ENCODE measurements at regions of chr2 and their contacts with region 1.

Region 1: GRCh38 chr2:84631047-84631446 is 114.7 kb downstream of the DNAH6 start:
- DNase-seq: no peak
- H3K4me3 Mint-ChIP-seq: no peak overlapping the region
- H3K27ac Mint-ChIP-seq: no peak overlapping the region
- H3K4me1 Mint-ChIP-seq: peaks cover 13% of the 10 kb centered on the region
- H3K27me3 Mint-ChIP-seq: no peaks in the 10 kb centered on the region

Region 2: DNA sequence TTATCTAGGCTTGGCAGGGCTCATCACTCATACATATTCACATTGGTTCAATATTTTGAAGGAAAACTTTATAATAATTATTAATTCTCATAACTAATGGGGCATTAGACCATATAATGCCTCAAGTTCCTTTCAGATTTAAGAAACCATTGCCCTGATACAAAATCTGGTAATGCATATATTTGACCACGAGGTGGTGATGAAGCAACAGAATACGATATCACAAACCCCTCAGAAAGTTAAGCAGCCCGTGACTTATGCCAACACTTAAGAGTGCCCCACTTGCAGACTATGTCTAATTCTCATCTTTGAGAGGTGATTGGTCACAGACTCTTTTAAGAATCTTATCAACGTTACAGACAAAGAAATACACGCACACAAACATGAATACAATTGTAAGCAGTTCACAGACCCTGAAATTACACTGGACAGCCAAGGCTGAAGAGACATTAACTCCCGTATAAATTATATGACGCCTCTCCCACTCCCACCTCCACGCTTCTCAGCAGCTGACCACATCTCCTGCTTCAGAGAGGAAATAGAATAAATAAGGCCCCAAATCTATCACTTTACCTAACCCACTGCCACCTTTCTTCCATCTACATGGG is 135.4 kb before region 1 on chr2:
- CTCF ChIA-PET with region 1: interaction called, 13 read pairs
- POLR2A ChIA-PET with region 1: no interaction called
- DNase-seq: peak; percentile 29
- H3K4me3 Mint-ChIP-seq: no peak overlapping the region
- H3K27ac Mint-ChIP-seq: no peak overlapping the region
- H3K4me1 Mint-ChIP-seq: peaks cover 12% of the 10 kb centered on the region
- H3K27me3 Mint-ChIP-seq: no peaks in the 10 kb centered on the region

Region 3: DNA sequence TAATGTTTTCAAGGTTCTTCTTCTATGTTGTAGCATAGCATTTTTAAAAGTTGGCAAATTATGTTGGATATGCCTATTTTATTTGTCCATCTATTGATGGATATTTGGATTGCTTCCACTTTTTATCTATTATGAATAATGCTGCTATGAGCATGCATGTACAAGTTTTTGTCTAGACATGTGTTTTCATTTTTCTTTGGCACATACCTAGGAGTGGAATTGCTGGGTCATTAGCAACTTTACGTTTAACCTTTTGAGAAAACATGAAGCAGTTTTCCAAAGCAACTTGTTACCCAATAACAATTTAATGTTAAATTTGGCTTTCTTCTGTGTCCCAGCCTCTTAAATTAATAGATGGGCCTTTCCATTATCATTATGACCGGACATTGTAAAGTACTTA is 84.5 kb before region 1 on chr2:
- CTCF ChIA-PET with region 1: no interaction called
- POLR2A ChIA-PET with region 1: no interaction called
- DNase-seq: no peak
- H3K4me3 Mint-ChIP-seq: no peak overlapping the region
- H3K27ac Mint-ChIP-seq: no peak overlapping the region
- H3K4me1 Mint-ChIP-seq: no peaks in the 10 kb centered on the region
- H3K27me3 Mint-ChIP-seq: no peaks in the 10 kb centered on the region